ENCODE measurements at regions of chr7 and their contacts with region 1.

Region 1: GRCh38 chr7:42831718-42832431 is 80.0 kb downstream of the C7orf25 start:
- DNase-seq: peak; percentile 69
- H3K4me3 ChIP-seq: no peak overlapping the region
- H3K27ac ChIP-seq: no peak overlapping the region
- H3K4me1 ChIP-seq: no peaks in the 10 kb centered on the region
- H3K27me3 ChIP-seq: no peaks in the 10 kb centered on the region
- CTCF ChIP-seq: peak; percentile 51 to 55 (median 54)
- POLR2A ChIP-seq: no peak

Region 2: GRCh38 chr7:41977151-41977651 is 854.7 kb before region 1 on chr7:
- intact Hi-C with region 1: loop called (anchors 10 kb)
- DNase-seq: peak; percentile 43
- H3K4me3 ChIP-seq: no peak overlapping the region
- H3K27ac ChIP-seq: no peak overlapping the region
- H3K4me1 ChIP-seq: peaks cover 10% of the 10 kb centered on the region
- H3K27me3 ChIP-seq: no peaks in the 10 kb centered on the region
- CTCF ChIP-seq: peak; percentile 44 to 58 (median 55)
- POLR2A ChIP-seq: no peak

Region 3: DNA sequence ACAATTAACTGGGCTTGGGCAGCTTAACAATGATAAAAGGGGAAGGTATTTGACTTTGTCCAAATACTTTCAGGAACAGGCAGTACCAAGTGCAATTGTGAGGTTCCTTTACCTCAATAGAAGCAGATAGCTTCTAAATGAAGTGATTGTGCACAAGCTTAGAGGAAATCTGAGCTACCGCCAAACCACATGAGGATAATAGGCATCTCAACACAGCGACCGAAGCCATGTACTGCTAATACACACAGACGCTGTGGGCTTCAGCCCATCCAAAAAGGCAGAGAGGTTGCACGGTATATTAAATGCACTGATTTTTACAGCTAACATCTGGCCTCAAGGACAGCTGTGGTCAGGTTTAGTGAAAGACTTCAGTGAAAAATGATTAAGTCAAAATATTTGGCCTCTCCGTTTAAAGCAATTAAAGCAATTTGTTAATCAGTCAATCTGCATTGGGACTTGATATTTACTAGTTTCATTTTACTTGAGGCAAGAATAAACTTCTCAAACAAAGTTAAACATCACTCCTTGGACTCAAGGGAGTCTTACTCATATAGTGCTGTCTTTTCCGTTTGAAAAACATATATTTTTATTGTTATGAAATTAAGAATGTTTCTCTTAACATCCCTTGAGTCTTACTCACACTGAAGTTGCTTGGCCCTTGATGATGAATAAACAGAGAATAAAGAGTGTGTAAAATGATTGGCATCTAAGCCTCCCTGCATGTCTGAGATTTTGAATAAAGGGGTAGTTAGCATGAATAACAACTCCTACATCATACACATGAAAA is 226.3 kb before region 1 on chr7:
- intact Hi-C with region 1: no loop called
- DNase-seq: no peak
- H3K4me3 ChIP-seq: no peak overlapping the region
- H3K27ac ChIP-seq: no peak overlapping the region
- H3K4me1 ChIP-seq: no peaks in the 10 kb centered on the region
- H3K27me3 ChIP-seq: no peaks in the 10 kb centered on the region
- CTCF ChIP-seq: no peak
- POLR2A ChIP-seq: no peak

Region 4: DNA sequence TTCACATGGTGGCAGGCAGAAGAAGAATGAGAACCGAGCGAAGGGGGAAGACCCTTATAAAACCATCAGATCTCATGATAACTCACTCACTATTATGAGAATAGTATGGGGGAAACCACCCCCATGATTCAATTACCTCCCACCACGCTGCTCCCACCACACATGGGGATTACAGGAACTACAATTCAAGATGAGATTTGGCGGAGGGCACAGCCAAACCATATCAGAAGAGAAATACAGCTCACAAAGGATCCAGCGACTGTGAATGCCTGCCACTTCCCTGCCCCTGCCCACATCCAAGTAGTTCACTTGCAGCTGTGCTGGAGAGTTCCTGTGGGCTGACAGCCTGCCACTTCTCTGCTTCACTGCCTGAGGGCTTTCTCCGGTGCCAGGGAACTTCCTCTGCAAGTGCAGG is 68.7 kb before region 1 on chr7:
- intact Hi-C with region 1: no loop called
- DNase-seq: no peak
- H3K4me3 ChIP-seq: no peak overlapping the region
- H3K27ac ChIP-seq: no peak overlapping the region
- H3K4me1 ChIP-seq: no peaks in the 10 kb centered on the region
- H3K27me3 ChIP-seq: no peaks in the 10 kb centered on the region
- CTCF ChIP-seq: no peak
- POLR2A ChIP-seq: no peak